Activated naive CD4-positive, alpha-beta T cell treated with anti-CD3 and anti-CD28 coated beads for 36 hours (primary cell): ENCODE measurements at regions of chr7 and their contacts with region 1.

Region 1: GRCh38 chr7:99642027-99642426 is 25.3 kb downstream of the ZSCAN25 start:
- DNase-seq: no peak
- H3K4me3 Mint-ChIP-seq: no peak overlapping the region
- H3K27ac Mint-ChIP-seq: peak overlapping the region; percentile 33
- H3K4me1 Mint-ChIP-seq: peaks cover 44% of the 10 kb centered on the region
- H3K27me3 Mint-ChIP-seq: no peaks in the 10 kb centered on the region

Region 2: GRCh38 chr7:99472561-99473243 is 169.3 kb before region 1 on chr7 and contains the start of gene ZNF789:
- CTCF ChIA-PET with region 1: no interaction called
- intact Hi-C with region 1: no loop called
- DNase-seq: peak; percentile 99
- H3K4me3 Mint-ChIP-seq: peak within 1 kb of the TSS; percentile 95
- H3K27ac Mint-ChIP-seq: peak within 1 kb of the TSS; percentile 83
- H3K4me1 Mint-ChIP-seq: peaks cover 32% of the 10 kb centered on the region
- H3K27me3 Mint-ChIP-seq: no peaks in the 10 kb centered on the region
- total RNA-seq, gene ZNF789: 8.0 to 9.8 TPM

Region 3: DNA sequence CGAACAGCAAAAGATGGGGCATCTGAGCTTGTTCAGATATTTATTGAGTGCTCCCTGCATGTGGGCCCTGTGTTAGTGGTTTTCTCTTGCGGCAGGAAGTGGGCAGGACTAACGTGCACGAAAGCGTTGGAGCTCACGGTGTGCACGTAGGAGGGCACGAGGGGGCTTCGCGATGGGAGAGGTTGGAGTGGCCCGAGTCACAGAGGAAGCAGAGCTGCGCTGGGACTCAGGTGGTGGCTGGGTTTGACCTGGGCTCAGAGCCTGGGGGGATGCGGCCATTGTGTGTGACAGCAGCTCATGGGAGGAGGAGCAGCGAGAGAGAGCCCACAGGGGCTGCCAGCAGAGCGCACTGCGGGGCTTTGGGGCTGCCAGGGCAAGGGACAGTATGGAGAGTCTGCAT is 17.5 kb before region 1 on chr7:
- CTCF ChIA-PET with region 1: no interaction called
- intact Hi-C with region 1: loop called (anchors 1 kb)
- DNase-seq: peak; percentile 87
- H3K4me3 Mint-ChIP-seq: peak overlapping the region; percentile 91
- H3K27ac Mint-ChIP-seq: peak overlapping the region; percentile 96
- H3K4me1 Mint-ChIP-seq: peaks cover 59% of the 10 kb centered on the region
- H3K27me3 Mint-ChIP-seq: no peaks in the 10 kb centered on the region